HepG2 (cell line): ENCODE measurements at regions of chr4 and their contacts with region 1.

Region 1: GRCh38 chr4:154578919-154579318 is 11.6 kb downstream of the FGA start:
- DNase-seq: no peak
- ATAC-seq: no peak
- H3K4me3 ChIP-seq: no peak overlapping the region
- H3K27ac ChIP-seq: no peak overlapping the region
- H3K4me1 ChIP-seq: peaks cover 31% of the 10 kb centered on the region
- H3K27me3 ChIP-seq: no peaks in the 10 kb centered on the region
- CTCF ChIP-seq: no peak
- EP300 ChIP-seq: no peak
- POLR2A ChIP-seq: no peak
- RAD21 ChIP-seq: no peak

Region 2: GRCh38 chr4:154361450-154361849 is 217.5 kb before region 1 on chr4:
- CTCF ChIA-PET with region 1: no interaction called
- POLR2A ChIA-PET with region 1: no interaction called
- in situ Hi-C with region 1: no loop called
- intact Hi-C with region 1: no loop called
- DNase-seq: no peak
- ATAC-seq: no peak
- H3K4me3 ChIP-seq: no peak overlapping the region
- H3K27ac ChIP-seq: no peak overlapping the region
- H3K4me1 ChIP-seq: no peaks in the 10 kb centered on the region
- H3K27me3 ChIP-seq: no peaks in the 10 kb centered on the region
- CTCF ChIP-seq: no peak
- EP300 ChIP-seq: no peak
- POLR2A ChIP-seq: no peak
- RAD21 ChIP-seq: no peak

Region 3: DNA sequence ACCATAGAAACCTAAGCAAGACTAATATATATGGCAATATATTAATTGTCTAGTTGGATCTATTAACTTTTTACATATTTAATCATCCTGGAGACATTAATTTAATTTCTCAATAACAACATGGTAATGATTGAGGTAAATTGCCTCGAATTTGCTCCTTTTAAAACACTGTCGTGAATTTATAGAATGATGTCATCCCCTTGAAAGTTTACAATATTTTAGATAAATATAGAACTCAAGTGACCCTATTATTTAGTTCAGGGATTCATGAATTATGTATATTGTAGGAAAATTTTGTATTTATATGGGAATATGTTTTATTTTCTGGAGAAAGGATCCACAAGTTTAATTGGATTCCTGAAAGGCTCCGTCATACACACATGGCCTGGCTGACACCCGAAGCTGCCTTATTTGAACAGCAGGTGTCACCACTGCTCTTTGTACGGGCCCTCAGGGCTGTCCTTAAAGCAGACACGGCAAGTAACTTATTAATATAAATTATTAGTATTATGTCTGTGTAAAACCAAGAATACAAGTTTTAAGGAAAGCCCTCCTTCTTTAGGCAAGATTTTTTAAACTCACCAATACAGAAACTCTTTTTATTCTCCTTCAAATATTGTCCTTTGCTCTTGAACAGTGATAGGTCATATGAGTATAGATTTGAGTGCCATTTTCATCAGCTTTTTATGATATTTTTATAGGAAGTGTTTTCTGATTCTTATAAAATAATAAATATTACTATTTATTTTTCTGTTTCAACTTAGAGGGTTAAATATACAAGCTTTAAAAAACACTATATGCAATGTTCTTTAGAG is 26.8 kb before region 1 on chr4:
- CTCF ChIA-PET with region 1: no interaction called
- POLR2A ChIA-PET with region 1: interaction called, 3 read pairs
- in situ Hi-C with region 1: no loop called
- intact Hi-C with region 1: loop called (anchors 1 kb)
- DNase-seq: peak; percentile 74
- ATAC-seq: peak; percentile 61
- H3K4me3 ChIP-seq: no peak overlapping the region
- H3K27ac ChIP-seq: no peak overlapping the region
- H3K4me1 ChIP-seq: peaks cover 21% of the 10 kb centered on the region
- H3K27me3 ChIP-seq: no peaks in the 10 kb centered on the region; a peak in 1 of 5 replicates
- CTCF ChIP-seq: peak; percentile 84
- EP300 ChIP-seq: no peak
- POLR2A ChIP-seq: no peak
- RAD21 ChIP-seq: peak; percentile 76; the same call in 1 of the 2 replicates

Region 4: DNA sequence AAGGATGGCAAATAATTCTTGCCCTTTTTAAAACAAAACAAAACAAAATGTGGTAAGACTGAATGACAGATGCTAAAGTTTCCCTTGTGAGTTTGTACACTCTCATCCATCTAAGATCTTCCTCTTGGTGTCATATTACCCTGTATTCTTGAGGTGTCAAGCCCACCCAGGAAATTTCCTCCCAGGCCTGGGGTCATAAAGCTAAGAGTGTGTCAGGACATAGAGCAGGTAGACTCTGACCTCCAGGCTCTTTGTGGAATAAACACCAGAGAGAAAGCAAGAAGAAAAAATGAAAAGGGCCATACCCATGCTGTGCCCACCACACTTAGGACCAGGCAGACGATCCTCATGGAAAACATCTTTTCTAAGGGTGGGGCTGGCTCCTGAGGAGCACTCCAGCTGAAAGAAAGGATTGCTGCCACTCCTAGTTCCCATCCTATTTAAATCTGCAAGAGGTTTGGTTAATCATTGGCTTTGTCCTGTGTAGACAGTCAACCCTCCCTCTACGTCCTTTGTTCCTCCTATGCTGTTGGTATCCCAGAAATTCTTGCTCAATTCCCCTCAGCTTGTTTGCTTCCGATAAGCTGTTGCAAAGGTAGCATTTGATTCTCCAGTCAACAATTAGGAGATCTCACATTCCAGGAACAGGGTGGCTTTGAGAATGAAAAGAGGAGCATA is 11.5 kb after region 1 on chr4 and contains the start of gene FGA:
- CTCF ChIA-PET with region 1: no interaction called
- POLR2A ChIA-PET with region 1: interaction called, 32 read pairs
- in situ Hi-C with region 1: no loop called
- intact Hi-C with region 1: loop called (anchors 2 kb)
- DNase-seq: peak; percentile 99
- ATAC-seq: peak; percentile 98
- H3K4me3 ChIP-seq: peak within 1 kb of the TSS; percentile 62 to 72 (median 68)
- H3K27ac ChIP-seq: peak within 1 kb of the TSS; percentile 74
- H3K4me1 ChIP-seq: peaks cover 96% of the 10 kb centered on the region
- H3K27me3 ChIP-seq: no peaks in the 10 kb centered on the region
- CTCF ChIP-seq: no peak
- EP300 ChIP-seq: peak; percentile 79 to 100; a peak in 3 of 4 replicates
- POLR2A ChIP-seq: peak; percentile 82 to 88
- RAD21 ChIP-seq: no peak; the same call in 1 of the 2 replicates
- total RNA-seq, gene FGA: 743 and 1,523 TPM in 2 replicates

Region 5: DNA sequence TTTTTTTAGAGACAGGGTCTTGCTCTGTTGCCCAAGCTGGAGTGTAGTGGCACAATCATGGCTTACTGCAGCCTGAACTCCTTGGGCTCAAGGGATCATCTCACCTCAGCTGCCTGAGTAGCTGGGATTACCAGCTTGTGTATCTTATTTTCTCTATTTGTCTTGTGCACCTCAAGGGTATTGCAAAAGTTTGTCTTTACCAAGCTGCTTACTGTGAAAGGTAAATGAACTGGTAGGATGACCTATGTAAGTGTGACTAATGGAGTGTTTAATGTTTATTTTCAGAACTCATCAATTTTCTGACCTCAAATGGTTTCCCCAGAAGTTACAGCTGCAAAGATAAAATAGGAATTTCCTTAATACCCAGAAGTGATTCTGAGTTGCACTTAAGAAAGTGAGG is 16.9 kb after region 1 on chr4:
- CTCF ChIA-PET with region 1: no interaction called
- POLR2A ChIA-PET with region 1: interaction called, 468 read pairs
- in situ Hi-C with region 1: no loop called
- intact Hi-C with region 1: loop called (anchors 2 kb)
- DNase-seq: peak; percentile 73
- ATAC-seq: no peak
- H3K4me3 ChIP-seq: no peak overlapping the region
- H3K27ac ChIP-seq: peak overlapping the region; percentile 45
- H3K4me1 ChIP-seq: peaks cover 98% of the 10 kb centered on the region
- H3K27me3 ChIP-seq: no peaks in the 10 kb centered on the region
- CTCF ChIP-seq: no peak
- EP300 ChIP-seq: peak in 1 of 2 experiments; percentile 98; a peak in 2 of 4 replicates
- POLR2A ChIP-seq: no peak
- RAD21 ChIP-seq: no peak

Region 6: GRCh38 chr4:154602404-154603020 is 23.6 kb after region 1 on chr4:
- CTCF ChIA-PET with region 1: no interaction called
- POLR2A ChIA-PET with region 1: interaction called, 468 read pairs
- in situ Hi-C with region 1: no loop called
- intact Hi-C with region 1: no loop called
- DNase-seq: no peak
- ATAC-seq: peak; percentile 8; the same call in 1 of the 3 replicates
- H3K4me3 ChIP-seq: no peak overlapping the region
- H3K27ac ChIP-seq: peak overlapping the region; percentile 0
- H3K4me1 ChIP-seq: peaks cover 87% of the 10 kb centered on the region
- H3K27me3 ChIP-seq: no peaks in the 10 kb centered on the region
- CTCF ChIP-seq: no peak
- EP300 ChIP-seq: no peak
- POLR2A ChIP-seq: peak; percentile 27 to 40; a peak in 3 of 4 replicates
- RAD21 ChIP-seq: no peak

Region 7: GRCh38 chr4:154612472-154613414 is 33.8 kb after region 1 on chr4 and contains the start of gene FGG:
- CTCF ChIA-PET with region 1: no interaction called
- POLR2A ChIA-PET with region 1: interaction called, 468 read pairs
- in situ Hi-C with region 1: no loop called
- intact Hi-C with region 1: loop called (anchors 1 kb)
- DNase-seq: peak; percentile 91
- ATAC-seq: peak; percentile 98
- H3K4me3 ChIP-seq: peak within 1 kb of the TSS; percentile 67 to 74 (median 67)
- H3K27ac ChIP-seq: peak within 1 kb of the TSS; percentile 78
- H3K4me1 ChIP-seq: peaks cover 70% of the 10 kb centered on the region
- H3K27me3 ChIP-seq: no peaks in the 10 kb centered on the region
- CTCF ChIP-seq: no peak
- EP300 ChIP-seq: peak in 1 of 2 experiments; percentile 80; a peak in 2 of 4 replicates
- POLR2A ChIP-seq: peak; percentile 96 to 99
- RAD21 ChIP-seq: no peak
- total RNA-seq, gene FGG: 1,495 and 2,423 TPM in 2 replicates

Region 8: DNA sequence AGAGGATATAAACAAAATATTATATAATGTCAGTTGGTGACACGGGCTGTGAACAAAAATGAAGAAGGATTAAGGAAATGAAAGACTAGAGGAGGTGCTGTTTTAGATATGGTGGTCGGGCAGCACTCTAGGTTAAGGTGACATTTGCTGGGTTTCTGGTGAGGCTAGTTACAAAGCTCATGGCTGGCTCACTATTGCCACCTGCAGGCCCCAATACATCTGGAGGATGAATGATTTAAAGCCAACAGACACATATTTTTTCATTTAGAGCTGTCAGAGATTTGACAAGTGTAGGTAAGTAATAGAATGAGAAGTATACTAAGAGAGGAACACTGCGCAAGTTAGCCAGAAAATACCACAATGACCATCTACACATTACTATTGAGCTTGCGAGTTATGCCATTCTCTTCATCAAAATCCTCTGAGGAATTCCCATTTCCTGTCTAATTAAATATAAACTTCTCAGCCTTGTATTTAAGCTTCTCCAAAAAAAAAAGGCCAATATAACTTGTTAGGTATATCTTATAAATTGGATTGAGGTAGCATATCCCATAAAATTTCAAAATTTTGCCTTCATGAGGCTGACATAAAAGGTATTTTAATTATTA is 39.9 kb after region 1 on chr4:
- CTCF ChIA-PET with region 1: no interaction called
- POLR2A ChIA-PET with region 1: interaction called, 468 read pairs
- in situ Hi-C with region 1: no loop called
- intact Hi-C with region 1: loop called (anchors 1 kb)
- DNase-seq: peak; percentile 80
- ATAC-seq: peak; percentile 76
- H3K4me3 ChIP-seq: peak overlapping the region in 2 of 3 experiments; percentile 17 to 27; a peak in 3 of 6 replicates
- H3K27ac ChIP-seq: peak overlapping the region; percentile 48
- H3K4me1 ChIP-seq: peaks cover 59% of the 10 kb centered on the region
- H3K27me3 ChIP-seq: no peaks in the 10 kb centered on the region; a peak in 1 of 5 replicates
- CTCF ChIP-seq: peak; percentile 90
- EP300 ChIP-seq: 0 out of 4 replicates have a peak, but pooled peaks of 1 of the 2 experiments have one; percentile 3
- POLR2A ChIP-seq: no peak
- RAD21 ChIP-seq: peak; percentile 94

Region 9: GRCh38 chr4:154660052-154660451 is 81.1 kb after region 1 on chr4:
- CTCF ChIA-PET with region 1: no interaction called
- POLR2A ChIA-PET with region 1: no interaction called
- in situ Hi-C with region 1: no loop called
- intact Hi-C with region 1: no loop called
- DNase-seq: peak; percentile 96
- ATAC-seq: peak; percentile 100
- H3K4me3 ChIP-seq: no peak overlapping the region
- H3K27ac ChIP-seq: peak overlapping the region; percentile 5
- H3K4me1 ChIP-seq: peaks cover 24% of the 10 kb centered on the region
- H3K27me3 ChIP-seq: peaks cover 0 to 3% of the 10 kb centered on the region in 2 experiments; a peak in 1 of 5 replicates
- CTCF ChIP-seq: no peak
- EP300 ChIP-seq: peak; percentile 22 to 92; a peak in 2 of 4 replicates
- POLR2A ChIP-seq: no peak
- RAD21 ChIP-seq: no peak

Region 10: GRCh38 chr4:154727540-154727939 is 148.6 kb after region 1 on chr4:
- CTCF ChIA-PET with region 1: no interaction called
- POLR2A ChIA-PET with region 1: no interaction called
- in situ Hi-C with region 1: no loop called
- intact Hi-C with region 1: no loop called
- DNase-seq: peak; percentile 32
- ATAC-seq: no peak; the same call in 2 of the 3 replicates
- H3K4me3 ChIP-seq: no peak overlapping the region
- H3K27ac ChIP-seq: no peak overlapping the region
- H3K4me1 ChIP-seq: peaks cover 9% of the 10 kb centered on the region; the same call in 1 of the 2 replicates
- H3K27me3 ChIP-seq: no peaks in the 10 kb centered on the region
- CTCF ChIP-seq: no peak
- EP300 ChIP-seq: no peak
- POLR2A ChIP-seq: no peak
- RAD21 ChIP-seq: no peak